Prostate gland (tissue), 2 donors: ENCODE measurements at regions of chr3 and their contacts with region 1.

Region 1: DNA sequence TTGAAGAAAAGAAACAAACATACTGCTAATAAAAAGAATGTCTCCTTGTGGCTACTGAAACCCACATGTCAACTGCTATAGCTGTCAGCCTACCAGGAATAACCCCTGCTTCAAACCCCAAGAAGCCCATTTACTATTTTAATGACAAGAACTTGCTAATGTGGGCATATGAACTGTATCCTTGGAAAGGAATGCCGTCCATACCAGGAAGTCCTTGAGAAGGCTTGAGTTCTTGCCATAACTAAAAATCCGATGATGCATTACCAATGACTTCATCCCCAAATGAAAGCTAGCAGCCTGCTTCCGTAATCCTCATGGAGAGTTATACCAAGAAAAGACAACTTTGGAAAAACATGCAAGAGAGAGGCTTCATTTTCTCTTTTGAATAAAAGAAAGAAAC is 34.8 kb downstream of the MINDY4B start:
- DNase-seq: no peak
- H3K4me3 ChIP-seq: no peak overlapping the region
- H3K27ac ChIP-seq: no peak overlapping the region
- H3K4me1 ChIP-seq: no peaks in the 10 kb centered on the region
- H3K27me3 ChIP-seq: no peaks in the 10 kb centered on the region
- CTCF ChIP-seq: no peak
- POLR2A ChIP-seq: no peak

Region 2: DNA sequence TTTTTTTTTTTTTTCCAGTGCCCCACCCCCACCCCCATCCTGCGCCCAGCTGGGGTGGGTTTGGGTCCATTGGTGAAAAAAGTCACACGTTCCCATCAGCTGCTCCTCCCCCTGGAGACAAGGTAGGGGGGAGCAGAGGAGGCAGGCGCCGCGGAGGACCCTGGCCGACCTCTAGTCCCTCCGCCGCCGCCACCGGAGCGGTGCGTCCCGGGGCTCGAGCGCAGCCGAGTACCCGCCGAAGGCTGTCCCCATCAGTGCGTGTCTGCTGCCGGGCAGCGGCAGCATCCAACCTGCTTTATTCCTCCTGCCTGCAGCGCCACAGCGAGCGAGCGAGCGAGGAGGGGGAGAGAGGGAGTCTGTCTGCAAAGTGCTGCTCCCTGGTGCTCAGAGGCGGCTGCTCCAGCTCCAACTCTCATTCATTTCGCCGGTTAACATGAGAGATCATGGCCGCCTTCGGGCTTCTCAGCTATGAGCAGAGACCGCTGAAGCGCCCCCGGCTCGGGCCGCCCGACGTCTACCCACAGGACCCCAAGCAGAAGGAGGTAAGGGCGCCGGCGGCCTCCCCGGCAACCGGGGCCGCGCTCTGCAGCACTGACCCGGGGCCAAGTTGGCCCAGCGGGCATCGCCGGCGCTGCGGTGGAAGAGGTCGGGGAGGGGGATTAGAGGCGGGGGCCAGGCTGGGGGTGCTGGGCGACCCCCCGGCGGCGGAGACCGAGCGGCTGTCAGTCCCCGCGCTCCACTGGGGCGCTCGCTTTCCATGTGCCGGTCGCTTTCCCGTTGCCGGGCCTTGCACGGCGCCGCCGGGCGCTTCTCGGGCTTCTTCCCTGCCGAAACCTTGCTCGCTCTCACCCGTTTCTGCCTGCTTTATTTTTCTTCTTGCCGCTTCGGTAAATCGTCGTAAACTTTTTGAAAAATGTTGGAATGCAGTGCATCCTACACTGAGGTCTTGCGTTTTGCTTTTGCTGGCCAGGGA is 216.4 kb after region 1 on chr3:
- intact Hi-C with region 1: loop called (anchors 5 kb)
- DNase-seq: peak; percentile 75
- H3K4me3 ChIP-seq: peak overlapping the region; percentile 56 to 74
- H3K27ac ChIP-seq: peak overlapping the region; percentile 53 to 69
- H3K4me1 ChIP-seq: no peaks in the 10 kb centered on the region
- H3K27me3 ChIP-seq: no peaks in the 10 kb centered on the region
- CTCF ChIP-seq: peak in 2 of 4 experiments; percentile 40 to 44
- POLR2A ChIP-seq: peak; percentile 17